MCF 10A (cell line): ENCODE measurements at regions of chr6 and their contacts with region 1.

Region 1: GRCh38 chr6:5471044-5471443 is 209.7 kb downstream of the FARS2 start:
- DNase-seq: peak; percentile 63
- H3K4me3 Mint-ChIP-seq: no peak overlapping the region
- H3K27ac Mint-ChIP-seq: no peak overlapping the region
- H3K4me1 Mint-ChIP-seq: no peaks in the 10 kb centered on the region
- H3K27me3 Mint-ChIP-seq: no peaks in the 10 kb centered on the region
- CTCF ChIP-seq: peak; percentile 83

Region 2: GRCh38 chr6:5361396-5361795 is 109.6 kb before region 1 on chr6:
- CTCF ChIA-PET with region 1: no interaction called
- POLR2A ChIA-PET with region 1: no interaction called
- intact Hi-C with region 1: no loop called
- DNase-seq: peak; percentile 22
- H3K4me3 Mint-ChIP-seq: no peak overlapping the region
- H3K27ac Mint-ChIP-seq: no peak overlapping the region
- H3K4me1 Mint-ChIP-seq: peaks cover 9% of the 10 kb centered on the region
- H3K27me3 Mint-ChIP-seq: no peaks in the 10 kb centered on the region
- CTCF ChIP-seq: no peak

Region 3: GRCh38 chr6:5459346-5459745 is 11.7 kb before region 1 on chr6:
- CTCF ChIA-PET with region 1: interaction called, 11 read pairs
- POLR2A ChIA-PET with region 1: interaction called, 5 read pairs
- intact Hi-C with region 1: no loop called
- DNase-seq: no peak
- H3K4me3 Mint-ChIP-seq: no peak overlapping the region
- H3K27ac Mint-ChIP-seq: no peak overlapping the region
- H3K4me1 Mint-ChIP-seq: peaks cover 19% of the 10 kb centered on the region
- H3K27me3 Mint-ChIP-seq: no peaks in the 10 kb centered on the region
- CTCF ChIP-seq: no peak

Region 4: DNA sequence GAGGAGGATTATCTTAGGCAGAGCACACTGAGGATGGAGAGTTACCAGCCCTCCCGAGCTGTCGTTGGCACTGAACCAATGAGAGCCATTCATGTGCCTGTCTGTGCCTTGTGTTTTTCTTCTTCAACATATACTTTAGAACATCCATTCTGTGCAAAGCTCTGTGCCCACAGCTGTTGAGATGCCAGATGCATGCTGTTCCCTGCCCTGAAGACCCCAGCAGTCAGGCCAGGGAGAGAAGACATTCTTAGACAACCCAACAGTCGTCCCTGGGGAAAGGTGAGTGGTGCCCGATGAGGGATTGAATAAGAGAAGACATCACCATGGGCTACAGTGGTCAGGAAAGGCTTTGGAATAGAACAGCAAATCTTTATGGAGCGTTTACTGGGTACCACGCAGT is 421.6 kb after region 1 on chr6:
- CTCF ChIA-PET with region 1: interaction called, 3 read pairs
- POLR2A ChIA-PET with region 1: no interaction called
- intact Hi-C with region 1: loop called (anchors 5 kb)
- DNase-seq: no peak
- H3K4me3 Mint-ChIP-seq: peak overlapping the region; percentile 82
- H3K27ac Mint-ChIP-seq: peak overlapping the region; percentile 93
- H3K4me1 Mint-ChIP-seq: no peaks in the 10 kb centered on the region
- H3K27me3 Mint-ChIP-seq: no peaks in the 10 kb centered on the region
- CTCF ChIP-seq: no peak

Region 5: GRCh38 chr6:6057424-6058053 is 586.5 kb after region 1 on chr6:
- CTCF ChIA-PET with region 1: no interaction called
- POLR2A ChIA-PET with region 1: no interaction called
- intact Hi-C with region 1: loop called (anchors 1 kb)
- DNase-seq: peak; percentile 66
- H3K4me3 Mint-ChIP-seq: no peak overlapping the region
- H3K27ac Mint-ChIP-seq: no peak overlapping the region
- H3K4me1 Mint-ChIP-seq: no peaks in the 10 kb centered on the region
- H3K27me3 Mint-ChIP-seq: peaks cover 28% of the 10 kb centered on the region
- CTCF ChIP-seq: peak; percentile 57

Region 6: DNA sequence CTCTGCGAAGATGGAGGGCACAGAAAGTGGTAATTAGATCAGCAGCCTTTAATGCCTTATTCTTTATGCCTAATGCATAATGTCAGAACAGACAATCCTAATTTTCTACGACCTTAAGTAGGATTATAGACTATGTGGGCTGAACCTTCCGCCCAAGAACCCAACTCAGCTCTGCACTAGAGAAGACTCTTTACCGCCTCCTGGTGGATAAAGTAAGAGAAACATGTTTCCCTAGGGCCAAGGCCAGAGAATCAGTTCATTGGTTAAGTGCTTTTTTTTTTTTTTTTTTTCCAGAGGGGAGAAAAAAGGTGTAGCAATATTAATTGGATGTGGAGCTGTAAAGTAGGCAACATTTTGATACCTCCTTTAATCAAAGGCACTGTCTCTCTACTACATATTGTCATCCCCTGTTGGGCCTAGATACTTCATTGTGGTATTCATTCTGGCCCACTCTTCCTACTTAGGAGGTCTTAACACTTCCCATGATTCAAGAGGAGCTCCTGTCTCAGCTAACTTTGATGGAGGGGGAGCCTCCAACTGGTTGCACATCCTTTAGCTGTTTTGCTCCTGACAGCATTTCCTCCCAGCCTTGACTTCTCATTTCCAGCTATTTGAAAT is 660.6 kb after region 1 on chr6:
- CTCF ChIA-PET with region 1: interaction called, 5 read pairs
- POLR2A ChIA-PET with region 1: no interaction called
- intact Hi-C with region 1: loop called (anchors 10 kb)
- DNase-seq: peak; percentile 51
- H3K4me3 Mint-ChIP-seq: no peak overlapping the region
- H3K27ac Mint-ChIP-seq: no peak overlapping the region
- H3K4me1 Mint-ChIP-seq: no peaks in the 10 kb centered on the region
- H3K27me3 Mint-ChIP-seq: peaks cover 15% of the 10 kb centered on the region
- CTCF ChIP-seq: peak; percentile 38